Caco-2 (cell line): ENCODE measurements at regions of chr12 and their contacts with region 1.

Region 1: DNA sequence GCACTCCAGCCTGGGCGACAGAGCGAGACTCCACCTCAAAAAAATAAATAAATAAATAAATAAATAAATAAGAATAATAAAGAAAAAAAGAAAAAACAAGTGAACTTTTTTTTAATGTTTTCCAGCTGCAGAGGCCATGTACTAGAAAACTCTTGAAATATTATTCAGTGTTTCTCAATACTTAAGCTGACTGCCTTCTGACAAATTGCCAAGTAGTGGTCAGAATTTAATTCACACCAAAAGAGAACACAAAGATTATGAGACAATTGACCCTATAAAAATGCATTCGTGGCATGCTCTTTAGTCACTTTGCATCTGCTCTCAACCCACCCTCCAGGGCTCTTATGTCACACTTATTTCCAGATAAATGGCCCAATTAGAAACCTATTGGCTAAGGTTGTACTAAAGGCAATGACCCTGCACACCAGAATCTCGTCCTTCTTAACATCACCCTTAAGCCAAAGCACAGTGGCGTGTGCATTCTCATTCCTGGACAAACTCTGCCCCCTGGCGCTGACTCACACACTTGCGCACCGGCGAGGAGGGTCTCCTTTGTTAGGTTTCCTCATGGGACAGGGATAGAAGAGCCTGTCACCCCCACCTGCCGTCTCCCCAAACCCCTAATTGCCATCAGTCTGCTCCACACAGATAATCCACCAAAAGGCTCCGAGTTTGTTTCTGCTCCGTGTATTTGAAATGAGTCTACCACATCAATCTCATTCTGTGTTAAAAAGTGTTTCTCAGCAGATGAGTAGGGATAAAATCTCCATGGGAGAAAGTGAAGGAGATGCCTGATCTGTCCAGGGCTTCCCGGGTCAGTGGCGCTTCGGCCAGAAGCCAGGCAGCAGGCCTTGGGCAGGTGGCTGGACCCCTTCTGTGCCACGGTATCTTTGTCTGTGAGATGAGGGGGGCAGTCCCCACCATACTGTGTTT is 73.1 kb upstream of the CEP83 start:
- DNase-seq: peak; percentile 65 to 81
- H3K4me3 ChIP-seq: no peak overlapping the region
- H3K4me3 Mint-ChIP-seq: no peak overlapping the region
- H3K27ac Mint-ChIP-seq: no peak overlapping the region
- H3K4me1 ChIP-seq: peaks cover 4% of the 10 kb centered on the region; the same call in 1 of the 2 replicates
- H3K4me1 Mint-ChIP-seq: peaks cover 17% of the 10 kb centered on the region
- H3K27me3 ChIP-seq: no peaks in the 10 kb centered on the region
- H3K27me3 Mint-ChIP-seq: no peaks in the 10 kb centered on the region
- CTCF ChIP-seq: peak; percentile 77 to 86

Region 2: GRCh38 chr12:94133964-94134795 is 398.6 kb before region 1 on chr12:
- CTCF ChIA-PET with region 1: interaction called, 3 read pairs
- POLR2A ChIA-PET with region 1: no interaction called
- intact Hi-C with region 1: loop called (anchors 1 kb)
- DNase-seq: peak in 1 of 2 experiments; percentile 56
- H3K4me3 ChIP-seq: no peak overlapping the region
- H3K4me3 Mint-ChIP-seq: no peak overlapping the region
- H3K27ac Mint-ChIP-seq: no peak overlapping the region
- H3K4me1 ChIP-seq: peaks cover 7% of the 10 kb centered on the region; the same call in 1 of the 2 replicates
- H3K4me1 Mint-ChIP-seq: no peaks in the 10 kb centered on the region
- H3K27me3 ChIP-seq: no peaks in the 10 kb centered on the region
- H3K27me3 Mint-ChIP-seq: peaks cover 4% of the 10 kb centered on the region
- CTCF ChIP-seq: peak; percentile 67 to 70

Region 3: DNA sequence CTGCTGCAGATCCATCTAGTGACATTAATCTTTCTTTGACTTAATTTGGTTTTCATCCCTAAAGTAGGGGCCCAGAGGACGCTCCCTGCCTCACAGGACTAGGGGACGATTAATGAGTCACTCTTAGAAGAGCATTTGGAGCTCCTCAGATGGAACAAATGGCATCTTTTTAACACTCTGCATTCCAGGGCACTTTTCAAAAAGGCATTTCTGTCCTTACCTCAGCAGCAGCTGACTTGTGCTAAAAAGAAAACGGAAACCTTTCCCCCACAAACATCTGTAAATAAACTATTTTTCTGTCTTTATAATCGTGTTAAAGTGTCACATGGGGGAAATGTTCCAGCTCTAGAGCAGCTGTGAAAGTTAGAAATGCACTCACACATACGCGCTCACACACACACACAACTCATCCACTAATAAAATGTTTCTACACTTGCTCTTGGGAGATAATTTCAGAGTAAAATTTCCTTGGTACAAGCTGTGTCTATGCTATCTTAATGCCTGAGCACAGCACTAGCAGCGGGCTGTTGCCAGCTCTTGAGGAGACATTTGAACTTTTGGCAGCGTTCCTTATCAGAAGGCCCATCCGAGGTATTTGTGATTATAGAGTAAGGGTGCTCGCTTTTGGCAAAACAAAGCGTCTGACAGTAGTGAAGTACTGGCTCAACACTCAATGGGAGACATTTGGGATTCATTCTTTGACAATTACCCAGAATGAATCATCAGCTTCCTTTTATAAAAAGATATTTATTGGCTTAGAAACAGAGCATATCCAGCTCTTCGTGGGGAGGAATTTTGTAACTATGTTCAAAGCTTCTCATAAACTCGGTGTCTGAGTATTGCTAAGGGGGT is 243.1 kb before region 1 on chr12:
- CTCF ChIA-PET with region 1: no interaction called
- POLR2A ChIA-PET with region 1: no interaction called
- intact Hi-C with region 1: loop called (anchors 10 kb)
- DNase-seq: no peak
- H3K4me3 ChIP-seq: no peak overlapping the region
- H3K4me3 Mint-ChIP-seq: no peak overlapping the region
- H3K27ac Mint-ChIP-seq: no peak overlapping the region
- H3K4me1 ChIP-seq: no peaks in the 10 kb centered on the region
- H3K4me1 Mint-ChIP-seq: peaks cover 18% of the 10 kb centered on the region
- H3K27me3 ChIP-seq: no peaks in the 10 kb centered on the region
- H3K27me3 Mint-ChIP-seq: no peaks in the 10 kb centered on the region
- CTCF ChIP-seq: no peak

Region 4: DNA sequence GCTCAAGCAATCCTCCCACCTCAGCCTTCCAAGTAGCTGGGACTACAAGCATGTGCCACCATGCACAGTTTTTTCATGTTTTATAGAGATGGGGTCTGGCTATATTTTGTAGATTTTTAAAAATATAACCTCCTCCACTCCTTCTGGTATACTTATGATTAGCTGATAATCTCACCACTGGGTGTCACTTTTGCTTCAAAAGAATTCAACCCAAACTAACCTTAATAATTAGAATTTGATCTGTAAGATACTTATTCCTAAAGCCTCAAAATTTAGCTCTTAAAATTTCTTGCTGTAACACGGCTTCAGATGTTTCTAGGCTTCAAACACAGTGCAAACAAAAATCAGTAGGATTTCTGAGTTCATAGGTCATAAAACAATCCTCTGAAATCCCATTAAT is 203.4 kb before region 1 on chr12:
- CTCF ChIA-PET with region 1: no interaction called
- POLR2A ChIA-PET with region 1: no interaction called
- intact Hi-C with region 1: loop called (anchors 1 kb)
- DNase-seq: no peak
- H3K4me3 ChIP-seq: no peak overlapping the region
- H3K4me3 Mint-ChIP-seq: no peak overlapping the region
- H3K27ac Mint-ChIP-seq: no peak overlapping the region
- H3K4me1 ChIP-seq: no peaks in the 10 kb centered on the region
- H3K4me1 Mint-ChIP-seq: no peaks in the 10 kb centered on the region
- H3K27me3 ChIP-seq: no peaks in the 10 kb centered on the region
- H3K27me3 Mint-ChIP-seq: no peaks in the 10 kb centered on the region
- CTCF ChIP-seq: peak in 1 of 2 experiments; percentile 11